ENCODE measurements at regions of chr2 and their contacts with region 1.

Region 1: DNA sequence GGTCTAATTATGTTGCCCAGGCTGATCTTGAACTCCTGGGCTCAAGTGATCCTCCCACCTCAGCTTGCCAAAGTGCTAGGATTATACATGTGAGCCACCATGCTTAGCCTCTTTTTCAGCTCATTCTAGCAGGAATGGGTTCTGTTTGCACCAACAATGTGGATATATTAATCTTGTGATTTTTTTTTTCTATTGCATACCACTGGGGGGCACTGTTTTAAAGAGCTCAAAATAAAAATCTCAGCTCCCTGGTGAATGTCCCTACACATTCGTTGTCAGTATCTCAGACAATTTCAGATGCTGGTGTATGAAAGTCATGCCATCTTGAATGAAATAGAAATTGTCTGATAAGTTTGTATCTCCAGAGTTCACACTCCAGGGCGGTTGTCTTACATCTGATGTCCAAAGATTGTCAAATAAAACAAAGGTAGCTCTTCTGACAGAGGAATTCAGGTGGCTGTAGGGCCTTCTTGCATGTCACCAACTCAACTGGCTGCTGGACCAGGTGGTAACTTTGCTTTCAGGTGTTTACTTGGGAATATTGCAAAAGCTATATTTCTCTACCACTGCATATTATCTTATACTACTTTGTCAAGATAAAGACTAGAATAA is 3.1 kb upstream of the MATN3 start:
- DNase-seq: peak; percentile 79
- H3K4me3 ChIP-seq: no peak overlapping the region
- H3K27ac ChIP-seq: no peak overlapping the region
- H3K4me1 ChIP-seq: peaks cover 3% of the 10 kb centered on the region
- H3K27me3 ChIP-seq: no peaks in the 10 kb centered on the region
- CTCF ChIP-seq: peak; percentile 68

Region 2: DNA sequence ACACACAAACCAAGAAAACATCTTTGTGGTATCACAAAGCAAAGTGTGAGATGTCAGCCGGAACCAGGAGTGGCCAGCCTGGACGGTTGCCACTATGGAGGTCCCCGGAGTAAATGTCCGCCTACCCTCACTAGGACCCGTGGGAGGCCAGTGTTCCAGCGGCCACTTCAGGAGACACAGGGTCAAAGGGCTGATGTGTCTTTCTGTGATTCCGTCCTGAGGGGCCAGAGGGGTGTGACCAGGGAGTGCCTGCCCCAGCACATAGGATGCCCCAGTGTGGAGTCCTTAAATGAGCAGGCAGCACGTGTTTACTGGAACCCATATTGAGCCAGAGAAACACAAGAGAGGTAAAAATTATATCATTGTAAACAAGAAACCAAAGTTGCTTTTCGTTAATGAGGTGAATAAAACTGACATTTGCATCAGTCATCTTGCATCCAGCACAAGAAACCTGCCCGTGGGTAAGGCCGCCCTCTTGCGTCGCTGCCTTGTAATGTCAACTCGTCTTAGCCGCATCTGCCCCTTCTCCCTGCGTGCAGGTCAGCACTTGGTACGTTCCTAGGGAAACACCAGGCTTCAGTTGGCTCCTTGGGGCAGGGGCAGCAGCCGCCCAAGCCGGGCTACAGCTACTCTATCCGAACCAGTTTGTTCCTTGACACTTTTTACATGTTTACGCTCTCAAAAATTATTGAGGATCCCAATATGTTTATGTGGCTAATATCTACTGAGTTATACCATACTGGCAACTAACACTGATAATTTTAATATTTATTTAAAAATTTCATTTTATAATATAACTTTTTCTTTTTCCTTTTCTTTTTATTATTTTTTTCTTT is 82.5 kb after region 1 on chr2:
- CTCF ChIA-PET with region 1: interaction called, 15 read pairs
- POLR2A ChIA-PET with region 1: no interaction called
- intact Hi-C with region 1: loop called (anchors 1 kb)
- DNase-seq: peak; percentile 91
- H3K4me3 ChIP-seq: no peak overlapping the region
- H3K27ac ChIP-seq: no peak overlapping the region
- H3K4me1 ChIP-seq: peaks cover 12% of the 10 kb centered on the region
- H3K27me3 ChIP-seq: no peaks in the 10 kb centered on the region
- CTCF ChIP-seq: peak; percentile 96

Measured in A673 (cell line).